Activated CD4-positive, alpha-beta memory T cell treated with anti-CD3 and anti-CD28 coated beads for 36 hours (primary cell): ENCODE measurements at regions of chr3 and their contacts with region 1.

Region 1: GRCh38 chr3:170205302-170205701 is 16.9 kb upstream of the PRKCI start:
- DNase-seq: no peak
- H3K4me3 Mint-ChIP-seq: no peak overlapping the region
- H3K27ac Mint-ChIP-seq: no peak overlapping the region
- H3K4me1 Mint-ChIP-seq: peaks cover 17% of the 10 kb centered on the region
- H3K27me3 Mint-ChIP-seq: peaks cover 18% of the 10 kb centered on the region

Region 2: DNA sequence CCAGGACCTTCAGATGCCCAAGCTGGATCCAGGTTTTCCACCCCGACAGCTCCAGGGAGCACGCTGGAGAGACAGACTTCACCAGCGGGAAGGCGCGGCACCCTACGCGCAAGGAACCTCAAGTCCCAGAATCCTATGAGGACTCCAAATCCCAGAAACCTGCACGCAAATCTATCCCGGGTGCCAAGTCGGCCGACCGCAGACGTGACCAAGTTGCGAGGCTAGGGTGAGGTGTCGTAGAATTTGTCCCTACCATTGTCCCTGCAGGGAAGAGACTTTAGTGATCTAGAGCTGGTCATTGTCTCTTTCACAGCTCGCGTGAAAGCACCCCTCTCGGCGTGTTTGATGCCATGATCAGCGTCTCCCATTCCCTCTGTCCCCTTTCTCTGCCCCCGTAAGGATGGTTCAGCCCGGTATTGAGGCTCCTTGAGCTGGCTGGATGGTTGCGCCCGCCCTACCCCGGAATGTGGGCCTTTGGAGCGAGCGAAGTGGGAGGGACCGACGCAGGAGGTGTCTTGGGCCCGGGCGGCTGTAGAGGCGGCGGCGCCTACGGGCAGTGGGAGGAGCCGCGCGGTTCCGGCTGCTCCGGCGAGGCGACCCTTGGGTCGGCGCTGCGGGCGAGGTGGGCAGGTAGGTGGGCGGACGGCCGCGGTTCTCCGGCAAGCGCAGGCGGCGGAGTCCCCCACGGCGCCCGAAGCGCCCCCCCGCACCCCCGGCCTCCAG is 16.8 kb after region 1 on chr3 and contains the start of gene PRKCI:
- CTCF ChIA-PET with region 1: no interaction called
- POLR2A ChIA-PET with region 1: no interaction called
- intact Hi-C with region 1: loop called (anchors 2 kb)
- DNase-seq: peak; percentile 95
- H3K4me3 Mint-ChIP-seq: peak within 1 kb of the TSS; percentile 93
- H3K27ac Mint-ChIP-seq: peak within 1 kb of the TSS; percentile 91
- H3K4me1 Mint-ChIP-seq: peaks cover 25% of the 10 kb centered on the region
- H3K27me3 Mint-ChIP-seq: no peaks in the 10 kb centered on the region
- total RNA-seq, gene PRKCI: 27.0 to 27.6 TPM